ENCODE measurements at regions of chr16 and their contacts with region 1.

Region 1: DNA sequence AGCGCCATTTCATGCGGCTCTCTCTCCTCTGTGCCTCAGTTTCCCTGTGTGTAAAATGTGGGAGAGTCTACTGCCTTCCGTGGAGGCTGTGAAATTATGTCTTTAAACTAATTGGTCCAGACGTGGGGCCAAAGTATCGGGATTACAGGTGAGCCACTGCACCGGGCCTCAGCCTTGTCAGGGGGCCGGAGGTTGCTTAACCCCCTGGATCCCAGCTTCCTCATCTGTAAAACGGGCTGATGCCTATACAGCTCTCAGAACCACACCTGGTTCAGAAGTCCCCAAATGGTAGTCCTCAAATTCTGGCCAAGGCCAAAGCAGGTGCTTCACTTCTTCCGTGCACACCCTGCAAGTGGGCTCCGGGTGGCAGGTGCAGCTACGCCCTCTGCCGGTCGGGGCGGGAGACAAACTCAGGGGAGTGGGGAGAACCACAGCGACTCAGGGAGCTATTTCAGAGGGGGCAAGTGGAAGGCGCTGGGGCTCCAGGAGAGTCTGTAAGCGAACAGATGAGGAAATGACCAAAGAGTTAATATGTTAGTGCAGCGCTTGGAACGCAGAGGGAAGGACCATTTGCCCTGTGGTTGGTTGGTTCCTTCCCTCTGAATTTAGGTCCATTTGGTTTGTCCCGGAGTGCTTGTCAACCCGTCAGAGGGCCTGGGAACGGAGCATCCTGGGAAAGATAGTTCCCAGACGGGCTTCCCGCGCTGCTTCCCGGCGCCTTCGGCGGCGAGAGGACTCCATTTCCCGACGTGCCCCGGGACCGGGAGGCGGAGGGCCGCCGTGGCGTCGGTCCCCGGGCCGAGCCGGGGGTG is at the start of gene MGRN1:
- DNase-seq: peak; percentile 85 to 94 (median 90)
- ATAC-seq: peak; percentile 93
- H3K4me3 ChIP-seq: peak within 1 kb of the TSS; percentile 72
- H3K4me3 Mint-ChIP-seq: peak within 1 kb of the TSS; percentile 91 to 99 (median 94)
- H3K27ac ChIP-seq: peak within 1 kb of the TSS; percentile 83
- H3K27ac Mint-ChIP-seq: peak within 1 kb of the TSS; percentile 95 to 98 (median 97)
- H3K4me1 ChIP-seq: peaks cover 18 to 21% of the 10 kb centered on the region in 2 donors
- H3K4me1 Mint-ChIP-seq: peaks cover 25 to 43% (median 38%) of the 10 kb centered on the region in 7 donors
- H3K27me3 ChIP-seq: no peaks in the 10 kb centered on the region
- H3K27me3 Mint-ChIP-seq: no peaks in the 10 kb centered on the region
- total RNA-seq, gene MGRN1: 62.6 to 103 (median 81.2) TPM

Region 2: GRCh38 chr16:4261557-4262172 is 362.6 kb before region 1 on chr16:
- CTCF ChIA-PET with region 1: no interaction called
- POLR2A ChIA-PET with region 1: no interaction called
- intact Hi-C with region 1: no loop called
- DNase-seq: peak in 8 of 9 donors; percentile 18 to 63 (median 30)
- ATAC-seq: peak; percentile 60
- H3K4me3 ChIP-seq: no peak overlapping the region
- H3K4me3 Mint-ChIP-seq: no peak overlapping the region
- H3K27ac ChIP-seq: no peak overlapping the region
- H3K27ac Mint-ChIP-seq: peak overlapping the region in 2 of 9 donors; percentile 15 to 69
- H3K4me1 ChIP-seq: no peaks in the 10 kb centered on the region
- H3K4me1 Mint-ChIP-seq: peaks cover 0 to 13% (median 8%) of the 10 kb centered on the region in 7 donors
- H3K27me3 ChIP-seq: no peaks in the 10 kb centered on the region
- H3K27me3 Mint-ChIP-seq: no peaks in the 10 kb centered on the region

Region 3: DNA sequence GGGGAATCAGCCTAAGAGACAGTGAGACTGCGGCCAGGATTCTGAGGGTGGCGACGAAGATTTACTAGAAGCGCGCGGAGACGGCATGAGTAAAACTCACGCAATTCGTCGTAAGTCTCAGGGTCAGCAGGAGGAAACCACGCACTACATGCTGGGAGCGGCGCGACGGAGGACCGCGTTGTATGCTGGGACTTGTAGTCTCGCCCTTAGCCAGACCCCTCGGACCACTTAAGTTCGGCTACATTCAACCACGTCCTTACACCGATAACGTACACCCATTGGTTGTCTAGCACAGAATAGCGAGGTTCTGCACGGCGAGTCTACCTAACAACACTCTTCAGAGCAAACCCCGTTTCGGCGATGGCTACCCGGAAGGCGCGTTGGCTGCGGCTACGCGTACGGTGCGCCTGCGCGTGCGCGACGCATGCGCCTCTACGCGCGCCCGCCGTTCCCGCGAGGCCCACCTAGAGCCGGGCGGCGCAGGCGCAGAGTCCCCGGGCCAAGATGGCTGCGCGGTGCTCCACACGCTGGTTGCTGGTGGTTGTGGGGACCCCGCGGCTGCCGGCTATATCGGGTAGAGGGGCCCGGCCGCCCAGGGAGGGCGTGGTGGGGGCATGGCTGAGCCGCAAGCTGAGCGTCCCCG is 198.7 kb before region 1 on chr16 and contains the start of gene DNAJA3:
- CTCF ChIA-PET with region 1: no interaction called
- POLR2A ChIA-PET with region 1: no interaction called
- intact Hi-C with region 1: loop called in 1 of 2 experiments (anchors 2 kb)
- DNase-seq: peak; percentile 91 to 97 (median 95)
- ATAC-seq: peak; percentile 93
- H3K4me3 ChIP-seq: peak within 1 kb of the TSS; percentile 97
- H3K4me3 Mint-ChIP-seq: peak within 1 kb of the TSS; percentile 92 to 99 (median 98)
- H3K27ac ChIP-seq: peak within 1 kb of the TSS; percentile 95
- H3K27ac Mint-ChIP-seq: peak within 1 kb of the TSS; percentile 99 to 100 (median 100)
- H3K4me1 ChIP-seq: peaks cover 18% of the 10 kb centered on the region in 2 donors
- H3K4me1 Mint-ChIP-seq: peaks cover 26 to 37% (median 31%) of the 10 kb centered on the region in 7 donors
- H3K27me3 ChIP-seq: no peaks in the 10 kb centered on the region
- H3K27me3 Mint-ChIP-seq: peaks cover 0 to 4% (median 0%) of the 10 kb centered on the region in 5 donors
- total RNA-seq, gene DNAJA3: 33.6 to 79.8 (median 70.5) TPM

Region 4: GRCh38 chr16:4538350-4539235 is 85.6 kb before region 1 on chr16 and contains the start of gene CDIP1:
- CTCF ChIA-PET with region 1: no interaction called
- POLR2A ChIA-PET with region 1: interaction called, 3 read pairs
- intact Hi-C with region 1: loop called in 1 of 2 experiments (anchors 1 kb)
- DNase-seq: peak; percentile 85 to 93 (median 90)
- ATAC-seq: peak; percentile 92
- H3K4me3 ChIP-seq: peak within 1 kb of the TSS; percentile 81
- H3K4me3 Mint-ChIP-seq: peak within 1 kb of the TSS; percentile 66 to 91 (median 82)
- H3K27ac ChIP-seq: peak within 1 kb of the TSS; percentile 96
- H3K27ac Mint-ChIP-seq: peak within 1 kb of the TSS; percentile 78 to 97 (median 92)
- H3K4me1 ChIP-seq: peaks cover 10 to 33% of the 10 kb centered on the region in 2 donors
- H3K4me1 Mint-ChIP-seq: peaks cover 24 to 44% (median 40%) of the 10 kb centered on the region in 7 donors
- H3K27me3 ChIP-seq: no peaks in the 10 kb centered on the region
- H3K27me3 Mint-ChIP-seq: peaks cover 0 to 9% (median 0%) of the 10 kb centered on the region in 5 donors
- total RNA-seq, gene CDIP1: 28.1 to 41.1 (median 31.0) TPM

Region 5: GRCh38 chr16:4660454-4661007 is 36.3 kb after region 1 on chr16:
- CTCF ChIA-PET with region 1: interaction called, 4 read pairs
- POLR2A ChIA-PET with region 1: interaction called, 5 read pairs
- intact Hi-C with region 1: loop called (anchors 1 kb)
- DNase-seq: peak in 8 of 9 donors; percentile 49 to 81 (median 73)
- ATAC-seq: peak; percentile 60
- H3K4me3 ChIP-seq: no peak overlapping the region
- H3K4me3 Mint-ChIP-seq: peak overlapping the region in 9 of 10 donors; percentile 48 to 78 (median 62)
- H3K27ac ChIP-seq: peak overlapping the region; percentile 74
- H3K27ac Mint-ChIP-seq: peak overlapping the region; percentile 88 to 96 (median 92)
- H3K4me1 ChIP-seq: peaks cover 34 to 65% of the 10 kb centered on the region in 2 donors
- H3K4me1 Mint-ChIP-seq: peaks cover 38 to 72% (median 64%) of the 10 kb centered on the region in 7 donors
- H3K27me3 ChIP-seq: no peaks in the 10 kb centered on the region
- H3K27me3 Mint-ChIP-seq: no peaks in the 10 kb centered on the region

Region 6: GRCh38 chr16:4713663-4714501 is 89.7 kb after region 1 on chr16:
- CTCF ChIA-PET with region 1: no interaction called
- POLR2A ChIA-PET with region 1: no interaction called
- intact Hi-C with region 1: no loop called
- DNase-seq: no peak
- ATAC-seq: no peak
- H3K4me3 ChIP-seq: no peak overlapping the region
- H3K4me3 Mint-ChIP-seq: no peak overlapping the region
- H3K27ac ChIP-seq: no peak overlapping the region
- H3K27ac Mint-ChIP-seq: no peak overlapping the region
- H3K4me1 ChIP-seq: no peaks in the 10 kb centered on the region
- H3K4me1 Mint-ChIP-seq: no peaks in the 10 kb centered on the region
- H3K27me3 ChIP-seq: no peaks in the 10 kb centered on the region
- H3K27me3 Mint-ChIP-seq: no peaks in the 10 kb centered on the region

Region 7: DNA sequence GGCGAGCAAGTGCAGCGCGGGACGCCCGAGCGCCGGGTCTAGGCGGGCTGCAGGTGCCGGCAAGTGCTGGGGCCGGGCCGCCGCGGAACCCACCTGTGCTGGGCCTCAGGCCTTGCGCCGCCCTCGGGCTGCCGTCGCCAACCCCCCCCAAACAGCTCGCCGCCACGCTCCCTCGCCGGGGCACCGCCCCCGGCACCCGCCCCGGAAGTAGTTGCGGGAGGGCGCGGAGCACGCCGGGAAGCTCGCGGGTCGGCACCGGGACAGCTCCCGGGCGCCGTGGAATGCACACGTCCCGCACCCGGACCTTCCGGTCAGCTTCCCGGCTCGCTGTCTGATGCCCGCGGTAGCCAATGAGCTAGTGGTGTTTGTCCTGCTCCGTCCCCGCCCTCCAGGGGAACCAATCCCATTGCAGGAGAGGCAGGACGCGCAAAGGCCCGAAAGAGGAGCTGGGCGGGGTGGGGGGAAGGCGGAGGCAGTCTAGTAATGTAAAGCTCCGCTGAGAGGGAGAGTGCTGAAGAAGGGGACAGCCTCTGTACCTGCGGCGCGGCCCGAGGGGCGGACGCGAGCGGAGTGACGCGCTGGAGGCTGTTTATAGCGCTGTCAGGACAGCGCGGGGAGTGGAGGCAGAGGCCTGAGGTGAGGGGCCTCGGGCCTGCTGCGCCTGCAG is 110.0 kb after region 1 on chr16 and contains the starts of genes ANKS3 and DNAAF8:
- CTCF ChIA-PET with region 1: interaction called, 6 read pairs
- POLR2A ChIA-PET with region 1: interaction called, 7 read pairs
- intact Hi-C with region 1: loop called in 1 of 2 experiments (anchors 1 kb)
- DNase-seq: peak; percentile 72 to 90 (median 79)
- ATAC-seq: peak; percentile 86
- H3K4me3 ChIP-seq: peak within 1 kb of the TSS; percentile 98
- H3K4me3 Mint-ChIP-seq: peak within 1 kb of the TSS; percentile 84 to 96 (median 92)
- H3K27ac ChIP-seq: peak within 1 kb of the TSS; percentile 79
- H3K27ac Mint-ChIP-seq: peak within 1 kb of the TSS; percentile 73 to 92 (median 90)
- H3K4me1 ChIP-seq: peaks cover 6 to 9% of the 10 kb centered on the region in 2 donors
- H3K4me1 Mint-ChIP-seq: peaks cover 9 to 32% (median 20%) of the 10 kb centered on the region in 7 donors
- H3K27me3 ChIP-seq: no peaks in the 10 kb centered on the region
- H3K27me3 Mint-ChIP-seq: peaks cover 0 to 3% (median 0%) of the 10 kb centered on the region in 5 donors
- total RNA-seq, gene ANKS3: 17.6 to 32.7 (median 25.3) TPM
- total RNA-seq, gene DNAAF8: 0.11 to 0.57 (median 0.27) TPM

Region 8: DNA sequence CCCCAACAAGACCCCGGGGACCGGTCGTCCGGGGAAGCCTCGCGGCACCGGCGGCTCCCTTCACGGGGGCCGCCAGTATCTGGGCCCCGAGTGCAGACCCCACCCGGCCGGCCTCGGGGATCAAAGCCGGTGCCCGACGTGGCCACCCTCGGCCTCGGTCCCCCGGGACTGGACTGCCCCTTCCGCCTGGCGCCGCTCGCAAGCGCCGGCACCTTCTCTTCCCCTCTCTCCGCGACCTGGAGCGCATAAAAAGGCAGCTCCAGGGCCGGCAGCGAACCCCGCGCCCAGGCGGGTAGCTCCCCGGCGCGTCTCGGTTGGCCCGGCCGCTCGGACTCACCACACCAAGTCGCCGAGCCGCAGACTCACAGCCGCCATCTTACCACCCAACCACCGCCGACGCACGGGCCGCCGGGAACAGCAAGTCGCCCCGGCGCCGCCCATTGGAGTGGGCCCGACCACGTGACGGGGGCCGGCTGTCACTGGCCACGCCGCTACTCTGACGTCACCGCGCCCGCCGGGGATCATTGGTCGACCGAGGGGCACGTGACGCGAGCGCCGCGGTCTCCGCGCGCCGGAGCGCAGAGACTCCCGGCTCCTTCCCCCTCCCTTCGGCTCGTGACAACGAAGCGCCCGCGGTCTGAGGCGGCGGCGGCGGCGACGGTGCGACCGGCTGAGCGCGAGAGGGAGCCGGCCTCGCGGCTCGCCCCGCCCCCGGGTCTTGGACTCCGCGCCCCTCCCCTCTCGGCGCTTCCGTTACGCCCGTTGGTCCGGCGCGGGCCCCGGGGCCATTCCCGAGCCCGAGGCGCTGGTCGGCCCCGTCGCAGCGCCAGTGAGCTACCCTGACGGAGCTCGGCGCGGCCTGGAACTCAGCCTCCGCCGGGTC is 222.9 kb after region 1 on chr16 and contains the starts of genes GLYR1 and UBN1:
- CTCF ChIA-PET with region 1: no interaction called
- POLR2A ChIA-PET with region 1: no interaction called
- intact Hi-C with region 1: loop called (anchors 1 to 2 kb)
- DNase-seq: peak; percentile 99 to 100 (median 99)
- ATAC-seq: peak; percentile 95
- H3K4me3 ChIP-seq: peak within 1 kb of the TSS; percentile 84
- H3K4me3 Mint-ChIP-seq: peak within 1 kb of the TSS; percentile 86 to 96 (median 91)
- H3K27ac ChIP-seq: peak within 1 kb of the TSS; percentile 99
- H3K27ac Mint-ChIP-seq: peak within 1 kb of the TSS; percentile 74 to 94 (median 90)
- H3K4me1 ChIP-seq: peaks cover 30 to 38% of the 10 kb centered on the region in 2 donors
- H3K4me1 Mint-ChIP-seq: peaks cover 52 to 66% (median 58%) of the 10 kb centered on the region in 7 donors
- H3K27me3 ChIP-seq: no peaks in the 10 kb centered on the region
- H3K27me3 Mint-ChIP-seq: no peaks in the 10 kb centered on the region
- total RNA-seq, gene GLYR1: 98.7 to 122 (median 108) TPM
- total RNA-seq, gene UBN1: 39.5 to 58.7 (median 42.4) TPM